Breast epithelium (tissue), 4 donors: ENCODE measurements at regions of chr20 and their contacts with region 1.

Region 1: GRCh38 chr20:47453142-47453782 is 48.4 kb upstream of the NCOA3 start:
- DNase-seq: no peak
- H3K4me3 ChIP-seq: no peak overlapping the region
- H3K27ac ChIP-seq: no peak overlapping the region
- H3K4me1 ChIP-seq: no peaks in the 10 kb centered on the region
- H3K27me3 ChIP-seq: no peaks in the 10 kb centered on the region
- CTCF ChIP-seq: no peak
- POLR2A ChIP-seq: no peak

Region 2: DNA sequence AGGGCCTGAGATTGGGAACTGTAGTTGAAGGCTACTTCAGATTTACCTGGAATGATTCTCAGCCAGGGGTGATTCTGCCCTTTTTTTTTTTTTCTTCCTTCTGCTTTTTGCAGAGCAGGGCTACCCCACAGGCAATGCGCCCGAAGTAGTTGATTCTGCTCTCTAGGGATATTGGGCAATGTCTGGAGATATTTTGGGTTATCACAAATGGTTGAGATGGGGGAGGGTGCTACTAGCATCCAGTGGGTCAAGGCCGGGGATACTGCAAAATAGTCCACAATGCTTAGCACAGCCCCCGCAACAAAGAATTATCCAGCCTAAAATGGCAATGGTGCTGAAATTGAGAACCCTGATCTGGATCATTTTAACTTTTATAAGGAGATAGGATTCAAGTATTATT is 25.5 kb before region 1 on chr20:
- intact Hi-C with region 1: loop called (anchors 1 kb)
- DNase-seq: no peak
- H3K4me3 ChIP-seq: no peak overlapping the region
- H3K27ac ChIP-seq: no peak overlapping the region
- H3K4me1 ChIP-seq: no peaks in the 10 kb centered on the region
- H3K27me3 ChIP-seq: no peaks in the 10 kb centered on the region
- CTCF ChIP-seq: no peak
- POLR2A ChIP-seq: no peak

Region 3: GRCh38 chr20:48959902-48960550 is 1506.8 kb after region 1 on chr20:
- intact Hi-C with region 1: loop called (anchors 5 kb)
- DNase-seq: no peak
- H3K4me3 ChIP-seq: no peak overlapping the region
- H3K27ac ChIP-seq: no peak overlapping the region
- H3K4me1 ChIP-seq: peaks cover 0 to 3% of the 10 kb centered on the region in 2 donors
- H3K27me3 ChIP-seq: no peaks in the 10 kb centered on the region
- CTCF ChIP-seq: no peak
- POLR2A ChIP-seq: no peak